ENCODE measurements at regions of chr17 and their contacts with region 1.

Region 1: DNA sequence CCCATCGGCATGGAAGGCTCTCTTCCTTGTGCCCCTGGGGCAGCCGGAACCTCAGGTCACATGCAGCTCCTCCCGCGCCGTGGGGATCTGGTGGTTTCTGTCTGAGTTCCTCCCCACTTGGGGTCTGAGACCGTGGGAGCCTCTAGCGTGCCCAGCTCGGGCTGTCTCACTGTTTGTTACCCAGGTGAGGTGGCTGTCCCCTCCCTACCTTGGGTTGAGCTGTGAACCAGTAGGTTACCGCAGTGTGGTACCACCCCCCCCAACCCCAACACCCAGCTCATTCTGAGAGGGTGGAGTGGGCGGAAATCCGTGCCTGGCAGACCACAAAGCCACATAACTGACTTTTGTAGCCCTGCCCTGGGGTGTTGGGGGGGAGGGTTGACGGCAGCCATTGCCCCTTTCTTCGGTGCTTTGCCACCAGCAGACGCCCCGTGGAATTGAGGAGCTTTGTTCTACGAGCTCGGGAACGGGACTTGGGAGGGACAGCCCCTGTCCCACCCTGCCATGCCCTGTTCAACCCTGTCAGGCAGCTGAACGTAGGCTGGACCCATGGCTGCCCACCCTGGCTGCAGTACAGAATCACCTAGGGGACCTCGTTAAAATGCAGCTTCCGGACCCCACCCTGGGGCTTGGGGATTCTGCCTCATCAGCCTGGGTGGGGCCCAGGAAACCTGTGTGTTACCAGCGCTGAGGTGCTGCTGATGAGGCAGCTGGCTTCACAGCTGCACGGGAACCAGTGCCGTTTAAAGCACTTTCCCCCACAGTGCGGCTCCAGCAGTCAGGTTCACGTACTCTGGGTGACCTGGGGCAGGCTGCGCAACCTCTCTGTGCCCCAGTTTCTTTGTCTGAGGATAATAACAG is 18.5 kb downstream of the RAP1GAP2 start:
- DNase-seq: peak; percentile 97
- H3K4me3 Mint-ChIP-seq: peak overlapping the region; percentile 70
- H3K27ac Mint-ChIP-seq: peak overlapping the region; percentile 93
- H3K4me1 Mint-ChIP-seq: peaks cover 46% of the 10 kb centered on the region
- H3K27me3 Mint-ChIP-seq: peaks cover 27% of the 10 kb centered on the region

Region 2: GRCh38 chr17:2796164-2797125 is 18.3 kb before region 1 on chr17 and contains the start of gene RAP1GAP2:
- CTCF ChIA-PET with region 1: interaction called, 14 read pairs
- POLR2A ChIA-PET with region 1: interaction called, 21 read pairs
- DNase-seq: peak; percentile 89
- H3K4me3 Mint-ChIP-seq: peak within 1 kb of the TSS; percentile 88
- H3K27ac Mint-ChIP-seq: peak within 1 kb of the TSS; percentile 65
- H3K4me1 Mint-ChIP-seq: peaks cover 78% of the 10 kb centered on the region
- H3K27me3 Mint-ChIP-seq: peaks cover 12% of the 10 kb centered on the region
- total RNA-seq, gene RAP1GAP2: 27.8 to 37.3 TPM